Activated B cell treated with CpG ODN at 0.5 μM for 24 hours (primary cell): ENCODE measurements at regions of chr1 and their contacts with region 1.

Region 1: GRCh38 chr1:42681741-42682483 is at the start of gene YBX1:
- DNase-seq: peak; percentile 88
- ATAC-seq: peak; percentile 88
- H3K4me3 Mint-ChIP-seq: peak within 1 kb of the TSS; percentile 97
- H3K27ac Mint-ChIP-seq: peak within 1 kb of the TSS; percentile 97
- H3K4me1 Mint-ChIP-seq: peaks cover 57% of the 10 kb centered on the region
- H3K27me3 Mint-ChIP-seq: no peaks in the 10 kb centered on the region
- CTCF ChIP-seq: no peak
- total RNA-seq, gene YBX1: 609 and 693 TPM in 2 replicates

Region 2: DNA sequence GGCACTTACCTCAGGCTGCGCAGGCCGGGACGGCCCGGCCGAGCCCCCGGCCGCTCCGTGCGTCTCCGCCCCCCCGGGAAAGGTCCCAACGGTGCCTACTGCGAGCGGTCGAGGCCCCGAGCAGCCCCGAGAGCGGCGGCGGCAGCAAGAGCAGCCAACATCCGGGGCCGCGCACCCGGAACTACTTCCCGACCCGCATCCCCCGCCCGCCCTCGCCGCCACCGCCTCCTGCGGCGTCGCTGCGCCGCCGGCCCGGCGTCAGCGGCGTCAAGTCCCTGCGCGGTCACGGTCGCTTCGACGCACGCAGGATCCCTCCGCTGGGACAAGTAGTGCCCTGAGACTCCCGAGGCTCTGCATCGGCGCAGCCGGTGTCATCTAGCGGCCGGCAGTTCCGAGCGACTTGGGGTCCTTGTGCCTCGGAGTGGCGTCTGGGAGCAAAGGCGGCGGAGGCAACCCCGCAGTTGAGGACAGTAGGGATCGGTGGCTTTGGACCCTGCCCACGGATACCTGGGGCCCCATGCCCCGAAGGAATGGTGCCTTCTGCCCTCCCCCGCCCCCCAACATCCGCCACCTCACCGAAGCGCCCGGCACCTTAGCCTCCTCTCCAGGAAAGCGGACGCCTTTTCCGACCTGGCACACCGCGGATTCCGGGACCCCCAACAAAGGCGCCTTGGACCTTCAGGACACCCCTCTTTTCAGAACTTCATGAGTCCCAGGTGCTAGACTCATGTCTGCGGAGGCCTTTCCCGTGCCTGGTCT is 346.7 kb before region 1 on chr1 and contains the start of gene FOXJ3:
- CTCF ChIA-PET with region 1: no interaction called
- POLR2A ChIA-PET with region 1: interaction called, 8 read pairs
- intact Hi-C with region 1: loop called (anchors 1 kb)
- DNase-seq: peak; percentile 91
- ATAC-seq: peak; percentile 92
- H3K4me3 Mint-ChIP-seq: peak within 1 kb of the TSS; percentile 93
- H3K27ac Mint-ChIP-seq: peak within 1 kb of the TSS; percentile 86
- H3K4me1 Mint-ChIP-seq: peaks cover 41% of the 10 kb centered on the region
- H3K27me3 Mint-ChIP-seq: no peaks in the 10 kb centered on the region
- CTCF ChIP-seq: no peak
- total RNA-seq, gene FOXJ3: 54.7 and 63.9 TPM in 2 replicates

Region 3: DNA sequence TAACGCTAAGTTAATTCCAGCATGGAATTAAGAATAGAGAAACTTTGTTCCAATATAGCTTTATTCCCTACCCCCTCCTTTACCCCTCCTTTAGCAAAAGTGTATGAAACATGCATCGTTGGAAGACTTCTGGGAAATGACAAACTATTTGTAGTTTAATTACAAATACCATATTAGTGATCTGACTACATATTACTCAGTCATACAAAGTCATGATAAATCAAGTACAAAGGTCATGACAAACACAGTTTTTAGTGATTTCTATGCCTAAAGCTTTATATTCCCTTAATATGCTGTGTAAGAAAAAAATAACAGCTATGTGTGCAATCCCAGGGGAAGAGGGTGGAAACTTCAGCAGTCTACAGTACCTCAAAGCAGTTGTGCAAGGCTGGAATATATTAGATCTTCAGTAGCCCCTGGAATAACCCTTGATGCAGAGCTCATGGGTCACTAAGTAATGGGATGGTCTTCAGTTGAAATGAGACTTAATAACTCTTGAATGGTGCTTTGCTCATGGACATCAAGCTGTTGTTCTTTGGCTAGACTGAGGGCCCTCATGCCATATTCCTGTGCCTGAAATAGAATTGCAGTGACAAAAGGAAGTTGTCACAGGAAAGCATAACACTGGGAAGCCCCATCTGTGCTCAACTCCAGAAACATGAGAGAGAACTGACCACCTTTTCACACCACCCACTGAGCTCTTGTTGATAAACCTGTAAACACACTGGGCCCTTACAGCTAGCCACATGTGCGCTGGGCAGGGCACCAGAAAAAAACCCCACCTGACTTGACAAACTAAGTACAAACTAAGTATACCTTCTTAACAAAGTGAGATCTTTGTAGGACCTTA is 251.4 kb before region 1 on chr1:
- CTCF ChIA-PET with region 1: no interaction called
- POLR2A ChIA-PET with region 1: no interaction called
- intact Hi-C with region 1: no loop called
- DNase-seq: no peak
- ATAC-seq: no peak
- H3K4me3 Mint-ChIP-seq: no peak overlapping the region
- H3K27ac Mint-ChIP-seq: no peak overlapping the region
- H3K4me1 Mint-ChIP-seq: no peaks in the 10 kb centered on the region
- H3K27me3 Mint-ChIP-seq: no peaks in the 10 kb centered on the region
- CTCF ChIP-seq: no peak

Region 4: DNA sequence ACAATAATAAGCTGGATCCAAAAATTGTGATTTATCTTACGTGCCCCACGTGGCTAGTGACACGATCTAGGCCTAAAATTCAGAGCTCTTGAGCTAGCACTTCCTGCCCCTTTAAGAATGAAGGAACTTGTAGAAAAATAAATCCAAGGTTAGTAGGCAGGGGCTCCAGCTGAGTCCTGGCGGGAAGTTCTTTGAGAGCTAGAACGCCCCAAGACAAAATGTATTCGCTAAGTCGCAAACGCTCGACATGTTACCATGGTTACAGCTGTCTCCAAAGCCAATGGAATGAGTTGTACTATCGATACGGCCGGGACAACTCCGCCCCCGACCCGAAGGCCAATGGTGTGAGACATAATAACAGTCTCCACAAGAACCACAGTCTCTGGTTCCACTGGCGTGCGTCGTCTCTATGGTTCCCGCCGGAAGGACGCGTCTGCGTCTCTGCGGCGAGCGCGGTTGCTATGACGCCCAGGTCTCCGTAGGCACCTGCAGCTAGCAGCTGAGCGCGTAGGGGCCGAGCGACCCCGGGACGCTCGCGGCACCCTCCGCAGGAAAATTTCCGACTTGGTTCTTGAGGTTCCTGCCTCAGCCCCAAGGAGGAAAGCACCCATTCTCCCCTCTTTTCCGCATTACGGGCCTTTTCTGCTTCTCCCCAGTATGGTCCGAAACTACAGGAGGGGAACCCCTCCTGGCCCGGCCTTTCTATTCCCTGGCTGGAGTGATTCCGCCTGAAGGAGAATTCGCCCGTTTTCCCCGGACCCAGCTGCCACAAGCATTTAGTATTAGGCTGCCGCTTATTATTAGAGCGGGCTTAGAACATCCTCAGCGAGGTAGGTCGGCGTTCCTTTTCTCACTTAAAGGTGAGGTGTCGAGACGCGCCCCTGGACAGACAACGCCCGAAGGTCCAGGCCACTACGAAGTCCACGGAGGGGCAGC is 218.8 kb before region 1 on chr1 and contains the start of gene CCDC30:
- CTCF ChIA-PET with region 1: no interaction called
- POLR2A ChIA-PET with region 1: interaction called, 15 read pairs
- intact Hi-C with region 1: loop called (anchors 2 kb)
- DNase-seq: peak; percentile 86
- ATAC-seq: peak; percentile 98
- H3K4me3 Mint-ChIP-seq: peak within 1 kb of the TSS; percentile 88
- H3K27ac Mint-ChIP-seq: peak within 1 kb of the TSS; percentile 90
- H3K4me1 Mint-ChIP-seq: peaks cover 31% of the 10 kb centered on the region
- H3K27me3 Mint-ChIP-seq: no peaks in the 10 kb centered on the region
- CTCF ChIP-seq: no peak
- total RNA-seq, gene CCDC30: 3.5 and 4.3 TPM in 2 replicates

Region 5: DNA sequence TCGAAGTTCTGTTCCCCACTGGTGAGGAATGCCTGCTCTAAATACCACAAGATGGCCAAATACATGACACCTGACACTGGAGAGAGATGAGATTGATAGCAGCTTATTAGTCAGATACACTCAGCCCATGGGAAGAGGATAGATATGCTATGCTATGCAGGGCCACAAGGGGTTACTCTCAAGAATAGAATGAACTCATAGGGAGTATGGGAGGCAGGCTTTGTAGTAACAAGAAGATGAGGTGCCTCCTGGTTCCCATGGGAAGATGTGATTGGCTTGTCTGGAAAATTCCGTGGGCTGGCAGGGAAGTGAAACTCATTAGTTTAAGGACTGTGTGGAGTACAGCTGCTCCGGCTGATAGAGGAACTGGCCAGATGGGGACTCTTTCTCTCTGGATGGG is 202.3 kb before region 1 on chr1:
- CTCF ChIA-PET with region 1: no interaction called
- POLR2A ChIA-PET with region 1: no interaction called
- intact Hi-C with region 1: no loop called
- DNase-seq: no peak
- ATAC-seq: no peak
- H3K4me3 Mint-ChIP-seq: no peak overlapping the region
- H3K27ac Mint-ChIP-seq: no peak overlapping the region
- H3K4me1 Mint-ChIP-seq: no peaks in the 10 kb centered on the region
- H3K27me3 Mint-ChIP-seq: no peaks in the 10 kb centered on the region
- CTCF ChIP-seq: no peak

Region 6: GRCh38 chr1:42669936-42670335 is 12.0 kb before region 1 on chr1:
- CTCF ChIA-PET with region 1: no interaction called
- POLR2A ChIA-PET with region 1: interaction called, 15 read pairs
- intact Hi-C with region 1: no loop called
- DNase-seq: no peak
- ATAC-seq: no peak
- H3K4me3 Mint-ChIP-seq: no peak overlapping the region
- H3K27ac Mint-ChIP-seq: no peak overlapping the region
- H3K4me1 Mint-ChIP-seq: no peaks in the 10 kb centered on the region
- H3K27me3 Mint-ChIP-seq: no peaks in the 10 kb centered on the region
- CTCF ChIP-seq: no peak

Region 7: GRCh38 chr1:42846257-42847110 is 164.6 kb after region 1 on chr1 and contains the start of gene ZNF691:
- CTCF ChIA-PET with region 1: no interaction called
- POLR2A ChIA-PET with region 1: interaction called, 12 read pairs
- intact Hi-C with region 1: loop called (anchors 1 kb)
- DNase-seq: peak; percentile 63
- ATAC-seq: peak; percentile 97
- H3K4me3 Mint-ChIP-seq: peak within 1 kb of the TSS; percentile 94
- H3K27ac Mint-ChIP-seq: peak within 1 kb of the TSS; percentile 83
- H3K4me1 Mint-ChIP-seq: peaks cover 43% of the 10 kb centered on the region
- H3K27me3 Mint-ChIP-seq: no peaks in the 10 kb centered on the region
- CTCF ChIP-seq: no peak
- total RNA-seq, gene ZNF691: 13.1 and 16.1 TPM in 2 replicates

Region 8: GRCh38 chr1:43367904-43368645 is 686.2 kb after region 1 on chr1 and contains the start of gene ELOVL1:
- CTCF ChIA-PET with region 1: no interaction called
- POLR2A ChIA-PET with region 1: interaction called, 7 read pairs
- intact Hi-C with region 1: loop called (anchors 10 kb)
- DNase-seq: peak; percentile 92
- ATAC-seq: peak; percentile 87
- H3K4me3 Mint-ChIP-seq: peak within 1 kb of the TSS; percentile 93
- H3K27ac Mint-ChIP-seq: peak within 1 kb of the TSS; percentile 97
- H3K4me1 Mint-ChIP-seq: peaks cover 42% of the 10 kb centered on the region
- H3K27me3 Mint-ChIP-seq: no peaks in the 10 kb centered on the region
- CTCF ChIP-seq: no peak
- total RNA-seq, gene ELOVL1: 80.2 and 84.2 TPM in 2 replicates